GM12878 (cell line): ENCODE measurements at regions of chr15 and their contacts with region 1.

Region 1: DNA sequence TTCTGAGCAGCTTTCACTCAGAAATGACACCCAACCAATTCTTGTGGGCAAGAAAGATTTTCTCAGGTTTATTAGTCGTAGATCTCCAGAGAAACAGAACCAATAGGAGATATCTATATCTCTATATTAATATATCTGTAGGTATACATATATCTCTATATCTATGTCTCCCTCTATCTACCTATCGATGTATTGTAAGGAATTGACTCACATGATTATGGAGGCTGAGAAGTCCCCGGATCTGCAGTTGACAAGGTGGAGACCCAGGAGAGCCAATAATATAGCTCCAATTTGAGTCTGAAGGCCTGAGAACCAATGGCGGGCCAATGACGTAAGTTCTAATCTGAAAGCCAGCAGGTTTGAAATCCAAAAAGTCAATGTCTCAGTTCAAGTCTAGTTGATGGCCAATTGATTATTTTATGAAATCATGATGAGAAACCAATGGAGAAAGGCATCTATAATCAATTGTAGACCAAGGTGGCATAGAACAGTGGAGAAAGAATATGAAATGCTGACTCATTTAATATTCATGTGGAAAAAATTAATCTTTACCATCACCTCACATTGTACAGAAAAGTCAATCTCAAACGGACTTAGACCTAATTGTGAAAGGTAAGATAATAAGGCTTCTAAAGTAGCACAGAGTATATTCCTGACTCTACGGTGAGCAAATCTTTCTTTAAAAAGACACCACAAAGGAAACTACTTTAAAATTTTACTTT is 65.6 kb upstream of the CHRNA7 start:
- DNase-seq: no peak
- ATAC-seq: no peak
- H3K4me3 ChIP-seq: no peak overlapping the region
- H3K27ac ChIP-seq: no peak overlapping the region
- H3K4me1 ChIP-seq: no peaks in the 10 kb centered on the region
- H3K27me3 ChIP-seq: no peaks in the 10 kb centered on the region
- CTCF ChIP-seq: no peak
- EP300 ChIP-seq: no peak
- POLR2A ChIP-seq: no peak
- RAD21 ChIP-seq: no peak

Region 2: GRCh38 chr15:31660816-31661215 is 303.9 kb before region 1 on chr15:
- CTCF ChIA-PET with region 1: no interaction called
- POLR2A ChIA-PET with region 1: no interaction called
- RAD21 ChIA-PET with region 1: no interaction called
- SMC1A ChIA-PET with region 1: no interaction called
- in situ Hi-C with region 1: no loop called
- intact Hi-C with region 1: no loop called
- DNase-seq: no peak
- ATAC-seq: no peak
- H3K4me3 ChIP-seq: no peak overlapping the region
- H3K27ac ChIP-seq: no peak overlapping the region
- H3K4me1 ChIP-seq: no peaks in the 10 kb centered on the region
- H3K27me3 ChIP-seq: no peaks in the 10 kb centered on the region
- CTCF ChIP-seq: no peak
- EP300 ChIP-seq: no peak
- POLR2A ChIP-seq: no peak
- RAD21 ChIP-seq: no peak

Region 3: GRCh38 chr15:31870328-31871165 is 94.2 kb before region 1 on chr15:
- CTCF ChIA-PET with region 1: no interaction called
- POLR2A ChIA-PET with region 1: no interaction called
- RAD21 ChIA-PET with region 1: no interaction called
- SMC1A ChIA-PET with region 1: no interaction called
- in situ Hi-C with region 1: no loop called
- intact Hi-C with region 1: loop called (anchors 10 kb)
- DNase-seq: no peak
- ATAC-seq: peak; percentile 89
- H3K4me3 ChIP-seq: peak within 1 kb of the TSS; percentile 76
- H3K27ac ChIP-seq: no peak within 1 kb of the TSS
- H3K4me1 ChIP-seq: no peaks in the 10 kb centered on the region
- H3K27me3 ChIP-seq: peaks cover 0 to 6% of the 10 kb centered on the region in 2 experiments; a peak in 2 of 4 replicates
- CTCF ChIP-seq: no peak
- EP300 ChIP-seq: no peak
- POLR2A ChIP-seq: peak; percentile 40; the same call in 1 of the 2 replicates
- RAD21 ChIP-seq: no peak

Region 4: DNA sequence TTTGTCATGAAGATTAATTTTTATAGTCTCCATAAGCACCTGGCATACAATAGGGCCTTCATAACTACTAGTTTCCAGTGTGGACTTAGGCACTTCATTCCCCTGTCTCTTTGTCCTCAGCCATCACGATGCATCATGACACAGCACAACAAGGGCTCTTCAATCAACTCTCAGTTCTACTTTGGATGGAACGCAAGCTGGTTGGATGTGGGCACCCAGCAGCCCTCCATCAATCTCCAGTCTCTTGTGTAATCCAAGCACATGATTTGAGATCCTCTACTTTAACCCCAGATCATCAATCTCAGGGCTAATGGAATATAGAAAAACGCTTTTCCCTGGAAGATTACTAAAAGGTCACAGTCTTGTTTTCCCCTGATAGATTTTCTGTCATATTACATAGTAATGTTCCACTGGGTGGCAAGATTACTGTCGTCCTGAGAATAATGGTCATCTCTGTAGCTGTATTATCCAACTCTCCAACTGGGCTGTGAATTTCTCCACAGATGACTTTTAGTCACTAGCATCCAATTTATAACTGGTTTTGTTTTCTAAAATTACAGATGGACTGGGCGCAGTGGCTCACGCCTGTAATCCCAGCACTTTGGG is 42.7 kb after region 1 on chr15:
- CTCF ChIA-PET with region 1: no interaction called
- POLR2A ChIA-PET with region 1: no interaction called
- RAD21 ChIA-PET with region 1: no interaction called
- SMC1A ChIA-PET with region 1: no interaction called
- in situ Hi-C with region 1: loop called (anchors 5 kb)
- intact Hi-C with region 1: no loop called
- DNase-seq: no peak
- ATAC-seq: no peak
- H3K4me3 ChIP-seq: no peak overlapping the region
- H3K27ac ChIP-seq: no peak overlapping the region
- H3K4me1 ChIP-seq: no peaks in the 10 kb centered on the region
- H3K27me3 ChIP-seq: no peaks in the 10 kb centered on the region
- CTCF ChIP-seq: no peak
- EP300 ChIP-seq: no peak
- POLR2A ChIP-seq: no peak
- RAD21 ChIP-seq: no peak

Region 5: GRCh38 chr15:32091505-32092380 is 127.0 kb after region 1 on chr15:
- CTCF ChIA-PET with region 1: no interaction called
- POLR2A ChIA-PET with region 1: no interaction called
- RAD21 ChIA-PET with region 1: no interaction called
- SMC1A ChIA-PET with region 1: no interaction called
- in situ Hi-C with region 1: no loop called
- intact Hi-C with region 1: no loop called
- DNase-seq: no peak
- ATAC-seq: no peak
- H3K4me3 ChIP-seq: no peak overlapping the region
- H3K27ac ChIP-seq: no peak overlapping the region
- H3K4me1 ChIP-seq: no peaks in the 10 kb centered on the region
- H3K27me3 ChIP-seq: no peaks in the 10 kb centered on the region
- CTCF ChIP-seq: no peak
- EP300 ChIP-seq: no peak
- POLR2A ChIP-seq: no peak
- RAD21 ChIP-seq: no peak